CD8-positive, alpha-beta T cell (primary cell): ENCODE measurements at regions of chr11 and their contacts with region 1.

Region 1: GRCh38 chr11:2151500-2152257 is 9.3 kb downstream of the INS start:
- DNase-seq: peak; percentile 68 to 88 (median 82)
- ATAC-seq: peak; percentile 90
- H3K4me3 ChIP-seq: peak overlapping the region; percentile 14 to 18
- H3K4me3 Mint-ChIP-seq: peak overlapping the region; percentile 56
- H3K27ac ChIP-seq: peak overlapping the region in 1 of 2 experiments; percentile 45
- H3K27ac Mint-ChIP-seq: no peak overlapping the region
- H3K4me1 ChIP-seq: peaks cover 6% of the 10 kb centered on the region
- H3K4me1 Mint-ChIP-seq: peaks cover 6% of the 10 kb centered on the region
- H3K27me3 ChIP-seq: peaks cover 4 to 5% of the 10 kb centered on the region in 2 experiments
- H3K27me3 Mint-ChIP-seq: peaks cover 30% of the 10 kb centered on the region
- CTCF ChIP-seq: peak; percentile 74

Region 2: GRCh38 chr11:1652771-1653540 is 498.7 kb before region 1 on chr11:
- CTCF ChIA-PET with region 1: interaction called, 35 read pairs
- POLR2A ChIA-PET with region 1: no interaction called
- intact Hi-C with region 1: loop called (anchors 1 to 2 kb)
- DNase-seq: peak; percentile 59 to 89 (median 79)
- ATAC-seq: peak; percentile 97
- H3K4me3 ChIP-seq: no peak overlapping the region
- H3K4me3 Mint-ChIP-seq: no peak overlapping the region
- H3K27ac ChIP-seq: no peak overlapping the region
- H3K27ac Mint-ChIP-seq: no peak overlapping the region
- H3K4me1 ChIP-seq: no peaks in the 10 kb centered on the region
- H3K4me1 Mint-ChIP-seq: no peaks in the 10 kb centered on the region
- H3K27me3 ChIP-seq: peaks cover 3 to 12% of the 10 kb centered on the region in 2 experiments
- H3K27me3 Mint-ChIP-seq: peaks cover 23% of the 10 kb centered on the region
- CTCF ChIP-seq: peak; percentile 99

Region 3: DNA sequence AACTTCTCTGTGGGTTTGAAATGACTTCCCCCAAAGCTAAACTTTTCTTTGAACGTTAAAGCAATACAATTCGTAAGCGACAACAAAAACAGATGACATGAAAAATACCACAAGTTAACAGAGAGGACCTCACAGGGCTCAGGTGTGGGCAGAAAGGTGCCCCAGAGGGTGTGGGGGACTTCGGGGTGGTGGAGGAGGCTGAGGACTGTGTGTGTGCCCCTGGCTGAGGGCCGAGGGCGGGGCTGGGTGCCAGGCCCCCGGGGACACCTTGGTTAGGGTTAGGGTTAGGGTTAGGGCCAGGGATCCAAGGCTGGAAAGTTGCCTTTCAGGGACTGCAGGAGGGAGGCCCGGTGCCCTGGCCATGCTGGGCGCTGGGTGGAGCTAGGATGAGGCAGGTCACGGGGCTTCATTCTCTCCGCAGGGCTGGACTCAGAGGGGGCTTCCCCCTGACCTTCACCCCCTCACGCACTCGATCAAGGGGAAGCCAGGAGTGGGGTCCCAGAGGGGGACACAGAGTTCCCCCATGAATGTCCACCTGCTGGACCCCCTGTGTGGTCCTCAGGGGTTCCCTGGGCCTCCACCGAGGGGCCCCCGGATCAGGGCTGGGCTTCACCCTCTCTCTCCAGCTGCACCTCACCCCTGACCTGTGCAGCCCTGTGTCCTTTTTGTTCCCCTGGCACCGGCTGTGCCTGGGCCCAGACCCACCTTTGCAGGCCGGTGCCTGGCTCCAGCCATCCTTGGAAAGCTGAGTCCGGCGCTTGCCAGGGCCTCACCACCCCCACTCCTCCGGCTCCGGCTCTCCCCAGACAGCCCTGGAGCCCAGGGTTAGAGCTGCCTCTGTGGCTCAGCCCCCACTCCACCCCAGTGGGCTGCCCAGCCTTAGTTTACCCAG is 305.9 kb before region 1 on chr11:
- CTCF ChIA-PET with region 1: interaction called, 23 read pairs
- POLR2A ChIA-PET with region 1: no interaction called
- intact Hi-C with region 1: loop called in 1 of 2 experiments (anchors 5 kb)
- DNase-seq: peak in 4 of 9 experiments; percentile 51 to 79 (median 60)
- ATAC-seq: peak; percentile 68
- H3K4me3 ChIP-seq: peak overlapping the region in 1 of 2 experiments; percentile 1
- H3K4me3 Mint-ChIP-seq: peak overlapping the region; percentile 80
- H3K27ac ChIP-seq: peak overlapping the region in 1 of 2 experiments; percentile 57
- H3K27ac Mint-ChIP-seq: peak overlapping the region; percentile 87
- H3K4me1 ChIP-seq: peaks cover 68% of the 10 kb centered on the region
- H3K4me1 Mint-ChIP-seq: peaks cover 61% of the 10 kb centered on the region
- H3K27me3 ChIP-seq: no peaks in the 10 kb centered on the region
- H3K27me3 Mint-ChIP-seq: no peaks in the 10 kb centered on the region
- CTCF ChIP-seq: no peak

Region 4: DNA sequence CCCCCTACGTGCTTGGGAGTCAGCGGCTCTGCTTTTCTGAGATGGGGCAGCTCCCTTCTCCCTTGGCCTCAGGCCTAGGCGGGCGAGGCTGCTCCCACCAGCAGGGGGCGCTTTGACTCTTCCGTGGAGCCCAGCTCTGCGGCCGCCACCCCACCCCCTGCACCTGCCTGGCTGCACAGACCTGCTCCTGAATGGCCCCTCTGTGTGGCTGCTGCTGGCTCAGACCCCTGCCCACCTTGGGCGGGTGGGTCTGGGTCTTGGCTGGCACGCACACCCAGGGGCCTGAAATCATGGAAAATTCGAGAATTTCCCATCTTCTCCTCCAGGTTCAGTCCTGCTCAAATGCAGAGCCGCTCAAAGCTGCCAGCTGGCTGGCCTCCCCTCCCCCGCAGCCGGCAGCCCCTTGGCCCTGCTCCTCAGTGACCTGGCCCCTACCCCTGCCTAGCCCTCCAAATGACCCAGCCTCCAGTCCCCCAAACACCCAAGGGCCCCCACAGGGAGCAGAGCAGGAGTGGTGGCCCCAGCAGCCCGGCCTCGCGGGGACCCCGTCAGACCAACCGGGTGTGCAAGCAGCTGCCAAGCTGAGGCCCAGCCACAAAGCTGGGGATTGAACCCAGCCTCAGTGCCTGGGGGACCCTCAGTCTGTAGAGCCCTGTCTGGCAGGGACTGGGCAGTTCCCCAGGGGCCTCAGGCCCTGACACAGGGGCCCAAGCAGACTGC is 269.0 kb before region 1 on chr11:
- CTCF ChIA-PET with region 1: interaction called, 39 read pairs
- POLR2A ChIA-PET with region 1: interaction called, 4 read pairs
- intact Hi-C with region 1: loop called in 1 of 2 experiments (anchors 1 kb)
- DNase-seq: peak; percentile 57 to 91 (median 83)
- ATAC-seq: peak; percentile 91
- H3K4me3 ChIP-seq: no peak overlapping the region
- H3K4me3 Mint-ChIP-seq: no peak overlapping the region
- H3K27ac ChIP-seq: no peak overlapping the region
- H3K27ac Mint-ChIP-seq: no peak overlapping the region
- H3K4me1 ChIP-seq: peaks cover 14% of the 10 kb centered on the region
- H3K4me1 Mint-ChIP-seq: peaks cover 12% of the 10 kb centered on the region
- H3K27me3 ChIP-seq: no peaks in the 10 kb centered on the region
- H3K27me3 Mint-ChIP-seq: no peaks in the 10 kb centered on the region
- CTCF ChIP-seq: peak; percentile 69

Region 5: DNA sequence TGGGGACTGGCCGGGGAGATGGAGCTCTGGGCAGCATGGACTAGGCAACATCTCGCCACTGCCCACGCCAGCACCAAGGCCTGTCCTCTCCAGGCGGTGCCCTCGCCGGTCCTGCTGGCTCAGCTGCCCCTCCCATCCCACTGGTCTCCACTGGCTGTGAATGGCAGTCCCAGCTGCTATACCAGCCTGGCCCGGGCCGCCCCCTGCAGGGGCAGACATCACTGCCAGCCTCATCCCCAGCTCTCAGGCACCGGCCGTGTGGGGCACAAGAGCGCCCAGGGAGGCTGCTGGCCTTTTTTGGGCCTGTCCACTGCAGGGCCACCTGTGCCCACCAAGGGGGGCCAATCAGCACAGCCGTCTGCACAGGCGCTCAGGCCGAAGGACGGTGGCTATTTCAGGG is 124.0 kb before region 1 on chr11:
- CTCF ChIA-PET with region 1: interaction called, 34 read pairs
- POLR2A ChIA-PET with region 1: no interaction called
- intact Hi-C with region 1: no loop called
- DNase-seq: no peak
- ATAC-seq: no peak
- H3K4me3 ChIP-seq: no peak overlapping the region
- H3K4me3 Mint-ChIP-seq: no peak overlapping the region
- H3K27ac ChIP-seq: no peak overlapping the region
- H3K27ac Mint-ChIP-seq: no peak overlapping the region
- H3K4me1 ChIP-seq: no peaks in the 10 kb centered on the region
- H3K4me1 Mint-ChIP-seq: no peaks in the 10 kb centered on the region
- H3K27me3 ChIP-seq: no peaks in the 10 kb centered on the region
- H3K27me3 Mint-ChIP-seq: no peaks in the 10 kb centered on the region
- CTCF ChIP-seq: no peak

Region 6: DNA sequence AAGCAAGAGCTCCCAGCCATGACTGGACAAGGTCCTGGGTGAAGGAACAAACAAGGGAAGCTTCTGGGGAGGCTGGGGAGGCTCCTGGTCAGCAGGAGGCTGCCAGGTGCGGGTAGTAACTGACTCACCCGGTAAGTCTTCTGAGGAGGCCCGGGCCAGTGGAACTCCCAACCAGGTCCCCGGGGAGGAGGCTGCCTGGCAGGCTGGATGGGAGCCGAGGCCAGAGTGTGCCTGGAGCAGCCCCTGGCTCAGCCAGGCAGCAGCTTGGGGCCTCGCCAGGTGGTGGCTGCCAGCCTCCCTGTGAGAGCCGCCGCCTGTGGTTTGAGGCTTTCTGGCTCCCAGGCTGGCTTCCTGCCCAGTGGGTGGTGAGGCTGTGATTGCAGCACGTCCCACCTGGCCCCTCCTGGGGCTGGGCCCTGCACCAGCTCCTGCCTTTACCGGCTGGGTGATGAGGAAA is 58.7 kb before region 1 on chr11:
- CTCF ChIA-PET with region 1: interaction called, 6 read pairs
- POLR2A ChIA-PET with region 1: no interaction called
- intact Hi-C with region 1: loop called in 1 of 2 experiments (anchors 5 kb)
- DNase-seq: peak; percentile 49 to 86 (median 75)
- ATAC-seq: peak; percentile 79
- H3K4me3 ChIP-seq: no peak overlapping the region
- H3K4me3 Mint-ChIP-seq: no peak overlapping the region
- H3K27ac ChIP-seq: no peak overlapping the region
- H3K27ac Mint-ChIP-seq: no peak overlapping the region
- H3K4me1 ChIP-seq: peaks cover 12% of the 10 kb centered on the region
- H3K4me1 Mint-ChIP-seq: peaks cover 4% of the 10 kb centered on the region
- H3K27me3 ChIP-seq: peaks cover 0 to 9% of the 10 kb centered on the region in 2 experiments
- H3K27me3 Mint-ChIP-seq: peaks cover 11% of the 10 kb centered on the region
- CTCF ChIP-seq: no peak

Region 7: GRCh38 chr11:2166091-2166851 is 14.6 kb after region 1 on chr11:
- CTCF ChIA-PET with region 1: interaction called, 10 read pairs
- POLR2A ChIA-PET with region 1: no interaction called
- intact Hi-C with region 1: no loop called
- DNase-seq: peak in 6 of 9 experiments; percentile 21 to 63 (median 56)
- ATAC-seq: peak; percentile 73
- H3K4me3 ChIP-seq: no peak overlapping the region
- H3K4me3 Mint-ChIP-seq: no peak overlapping the region
- H3K27ac ChIP-seq: no peak overlapping the region
- H3K27ac Mint-ChIP-seq: no peak overlapping the region
- H3K4me1 ChIP-seq: no peaks in the 10 kb centered on the region
- H3K4me1 Mint-ChIP-seq: no peaks in the 10 kb centered on the region
- H3K27me3 ChIP-seq: no peaks in the 10 kb centered on the region
- H3K27me3 Mint-ChIP-seq: peaks cover 13% of the 10 kb centered on the region
- CTCF ChIP-seq: peak; percentile 41

Region 8: DNA sequence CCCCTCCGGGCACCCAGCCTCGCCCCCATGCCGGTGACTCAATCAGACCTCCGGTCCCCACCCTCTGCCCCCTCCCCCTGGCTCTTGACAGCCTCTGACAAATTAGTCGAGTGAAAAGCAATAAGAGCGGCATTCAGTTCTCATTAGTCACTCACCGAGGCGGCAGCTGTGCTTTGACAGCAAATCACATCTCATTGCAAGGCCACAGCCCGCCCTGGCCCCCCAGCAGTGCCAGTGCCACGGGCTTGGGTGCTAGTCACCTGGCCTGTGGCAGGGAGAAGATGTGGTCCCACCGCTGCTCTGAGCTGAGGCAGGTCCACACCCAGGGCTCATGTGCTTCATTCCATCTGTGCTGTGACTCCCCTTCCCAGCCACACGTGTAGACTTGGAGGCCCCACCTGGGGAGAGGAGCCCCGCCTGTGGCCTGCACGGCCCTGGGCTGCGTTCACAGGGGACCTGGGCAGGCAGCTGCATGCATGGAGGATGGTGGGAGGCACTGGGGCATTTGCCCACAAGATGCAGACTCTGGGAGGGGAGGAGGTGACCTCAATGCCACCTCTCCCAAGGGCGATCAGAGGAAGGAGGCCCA is 27.3 kb after region 1 on chr11:
- CTCF ChIA-PET with region 1: no interaction called
- POLR2A ChIA-PET with region 1: no interaction called
- intact Hi-C with region 1: no loop called
- DNase-seq: no peak
- ATAC-seq: no peak
- H3K4me3 ChIP-seq: no peak overlapping the region
- H3K4me3 Mint-ChIP-seq: no peak overlapping the region
- H3K27ac ChIP-seq: no peak overlapping the region
- H3K27ac Mint-ChIP-seq: no peak overlapping the region
- H3K4me1 ChIP-seq: no peaks in the 10 kb centered on the region
- H3K4me1 Mint-ChIP-seq: no peaks in the 10 kb centered on the region
- H3K27me3 ChIP-seq: no peaks in the 10 kb centered on the region
- H3K27me3 Mint-ChIP-seq: no peaks in the 10 kb centered on the region
- CTCF ChIP-seq: no peak

Region 9: DNA sequence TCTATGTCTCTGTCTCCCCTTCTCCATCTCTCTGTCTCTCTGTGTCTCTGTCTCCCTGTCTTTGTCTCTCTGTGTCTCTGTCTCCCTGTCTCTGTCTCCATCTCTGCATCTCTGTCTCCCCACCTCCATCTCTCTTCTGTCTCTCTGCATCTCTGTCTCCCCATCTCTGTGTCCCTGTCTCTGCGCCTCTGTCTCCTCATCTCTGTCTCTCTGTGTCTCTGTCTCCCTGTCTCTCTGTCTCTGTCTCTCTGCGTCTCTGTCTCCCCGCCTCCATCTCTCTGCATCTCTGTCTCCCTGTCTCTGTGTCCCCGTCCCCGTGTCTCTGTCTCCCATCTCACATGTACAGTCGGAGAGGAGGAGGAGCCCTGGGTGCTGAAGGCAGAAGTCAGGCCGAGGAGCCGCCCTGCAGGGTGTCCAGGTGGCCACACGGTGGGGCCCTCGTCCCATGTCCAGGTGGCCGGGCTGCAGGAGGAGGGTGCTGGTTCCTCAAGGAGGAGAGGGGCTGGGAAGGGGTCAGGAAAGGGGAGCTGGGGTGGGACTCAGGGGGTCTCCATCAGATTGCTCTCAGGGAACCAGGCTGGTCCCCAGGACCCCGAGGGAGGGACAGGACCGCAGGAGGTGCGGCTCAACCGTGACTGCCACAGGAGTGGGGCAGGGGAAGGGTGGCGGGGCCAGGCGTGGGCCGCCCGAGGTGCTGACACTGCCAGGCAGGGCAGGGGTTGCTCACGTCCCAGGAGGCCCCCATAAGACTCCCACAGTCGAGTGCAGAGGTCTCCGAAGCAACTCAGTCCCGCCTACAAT is 45.5 kb after region 1 on chr11:
- CTCF ChIA-PET with region 1: no interaction called
- POLR2A ChIA-PET with region 1: no interaction called
- intact Hi-C with region 1: no loop called
- DNase-seq: peak; percentile 51 to 87 (median 73)
- ATAC-seq: peak; percentile 93
- H3K4me3 ChIP-seq: no peak overlapping the region
- H3K4me3 Mint-ChIP-seq: no peak overlapping the region
- H3K27ac ChIP-seq: no peak overlapping the region
- H3K27ac Mint-ChIP-seq: no peak overlapping the region
- H3K4me1 ChIP-seq: peaks cover 14% of the 10 kb centered on the region
- H3K4me1 Mint-ChIP-seq: peaks cover 12% of the 10 kb centered on the region
- H3K27me3 ChIP-seq: peaks cover 0 to 3% of the 10 kb centered on the region in 2 experiments
- H3K27me3 Mint-ChIP-seq: peaks cover 6% of the 10 kb centered on the region
- CTCF ChIP-seq: peak; percentile 57

Region 10: DNA sequence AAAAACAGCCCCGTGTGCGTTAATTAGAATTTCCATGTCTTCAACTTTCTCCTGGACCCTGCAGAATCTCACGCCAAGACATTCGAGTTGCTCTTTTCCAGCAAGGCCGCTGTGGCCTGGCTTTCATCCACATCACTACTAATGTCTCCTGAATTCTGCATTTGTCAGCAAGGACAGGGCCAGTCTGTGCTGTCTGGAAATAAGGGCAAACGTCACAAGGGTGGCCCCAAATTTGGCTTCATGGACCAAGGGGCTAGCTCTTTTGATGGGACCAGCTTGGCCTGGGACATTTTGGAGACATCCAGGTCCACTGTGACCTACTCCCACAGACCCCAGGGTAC is 514.7 kb after region 1 on chr11:
- CTCF ChIA-PET with region 1: no interaction called
- POLR2A ChIA-PET with region 1: no interaction called
- intact Hi-C with region 1: no loop called
- DNase-seq: no peak
- ATAC-seq: no peak
- H3K4me3 ChIP-seq: no peak overlapping the region
- H3K4me3 Mint-ChIP-seq: no peak overlapping the region
- H3K27ac ChIP-seq: no peak overlapping the region
- H3K27ac Mint-ChIP-seq: no peak overlapping the region
- H3K4me1 ChIP-seq: no peaks in the 10 kb centered on the region
- H3K4me1 Mint-ChIP-seq: no peaks in the 10 kb centered on the region
- H3K27me3 ChIP-seq: no peaks in the 10 kb centered on the region
- H3K27me3 Mint-ChIP-seq: no peaks in the 10 kb centered on the region
- CTCF ChIP-seq: no peak